H1 (cell line): ENCODE measurements at regions of chr6 and their contacts with region 1.

Region 1: DNA sequence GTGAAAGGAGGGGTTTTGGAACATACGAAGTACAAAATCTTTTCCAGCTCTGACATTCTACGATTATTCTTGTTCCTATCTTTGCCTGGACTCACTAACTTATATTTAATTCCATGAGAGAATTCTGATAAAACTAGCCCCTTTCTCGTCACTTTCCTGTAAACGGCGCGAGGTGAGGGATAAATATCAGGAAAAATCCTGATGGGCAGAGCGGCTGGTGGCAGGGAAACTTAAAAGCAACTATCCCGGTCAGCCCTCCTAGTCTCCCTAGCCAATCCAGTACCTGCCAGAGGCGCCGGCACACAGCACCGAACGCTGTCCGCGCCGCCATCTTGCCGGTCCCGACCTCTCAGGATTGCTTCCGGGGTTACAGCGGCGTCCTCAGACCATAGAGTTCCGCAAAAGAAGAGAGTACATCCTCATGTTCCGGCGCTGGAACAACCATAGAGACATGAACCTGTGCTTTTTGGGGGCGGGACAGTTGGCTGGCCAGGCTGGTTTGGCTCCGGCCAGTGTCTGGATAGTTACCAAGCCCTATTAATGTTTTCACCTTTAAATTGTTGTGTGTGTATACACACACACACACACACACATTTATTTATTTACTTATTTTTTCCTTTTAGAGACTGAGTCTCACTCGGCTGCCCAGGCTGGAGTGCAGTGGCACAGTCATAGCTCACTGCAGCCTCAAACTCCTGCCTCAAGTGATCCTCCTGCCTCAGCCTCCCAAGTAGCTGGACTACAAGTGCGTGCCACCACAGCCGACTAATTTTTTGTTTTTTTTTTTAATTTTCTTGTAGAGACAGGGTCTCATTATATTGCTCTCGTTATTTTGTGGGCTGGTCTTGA is at the start of gene MRPS10:
- DNase-seq: peak; percentile 78 to 87
- H3K4me3 ChIP-seq: peak within 1 kb of the TSS; percentile 93 to 97 (median 94)
- H3K27ac ChIP-seq: peak within 1 kb of the TSS; percentile 52
- H3K4me1 ChIP-seq: no peaks in the 10 kb centered on the region; a peak in 1 of 7 replicates
- H3K27me3 ChIP-seq: no peaks in the 10 kb centered on the region
- CTCF ChIP-seq: no peak
- EP300 ChIP-seq: no peak
- POLR2A ChIP-seq: peak; percentile 68 to 94
- RAD21 ChIP-seq: 0 out of 4 replicates have a peak, but pooled peaks of 1 of the 2 experiments have one; percentile 2
- total RNA-seq, gene MRPS10: 32.0 and 33.6 TPM in 2 replicates

Region 2: DNA sequence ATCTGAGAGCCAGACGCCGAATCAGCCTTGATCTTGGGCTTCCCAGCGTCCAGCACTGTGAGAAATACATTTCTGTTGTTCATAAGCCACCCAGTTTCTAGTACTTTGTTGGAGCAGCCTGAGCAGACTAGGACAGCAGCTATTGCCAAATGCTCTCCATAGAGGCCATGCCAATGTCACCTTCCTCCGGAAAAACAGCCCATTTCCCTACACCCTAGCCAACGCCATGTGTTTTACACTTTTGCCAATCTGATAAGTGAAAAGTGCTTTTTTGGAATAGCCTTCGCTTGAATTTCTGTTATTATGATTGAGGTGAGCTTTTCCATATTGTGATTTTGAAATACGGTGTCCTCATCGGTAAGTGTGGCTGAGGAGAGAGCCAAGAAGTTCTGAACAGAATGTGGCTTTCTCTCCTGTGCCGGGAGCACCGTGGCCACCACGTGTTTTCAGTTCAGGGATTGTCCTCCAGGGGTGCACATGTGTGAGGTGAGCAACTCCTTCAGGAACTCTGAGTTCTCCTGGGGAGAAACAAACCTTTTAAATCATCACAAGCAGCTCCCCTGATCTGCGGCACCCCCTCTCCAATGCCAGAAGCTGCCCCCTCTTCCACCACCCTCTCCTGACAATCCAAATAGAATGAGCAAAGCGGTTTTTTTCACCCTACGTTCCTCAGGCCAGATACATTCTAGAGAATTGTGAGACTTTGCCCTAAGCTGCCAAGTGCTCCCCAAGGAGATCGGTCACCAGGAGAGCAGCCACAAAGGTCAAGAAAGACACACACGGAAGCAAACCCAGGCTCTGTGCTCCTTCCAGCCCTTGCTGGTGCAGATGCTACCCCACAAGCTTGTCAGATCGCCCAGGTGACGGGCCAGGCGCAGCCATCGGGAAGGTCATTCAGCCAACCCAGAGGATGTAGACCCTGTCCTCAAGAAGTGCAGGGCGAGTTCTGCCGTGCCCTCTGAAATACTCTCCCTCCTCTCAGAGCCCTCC is 131.4 kb before region 1 on chr6:
- CTCF ChIA-PET with region 1: interaction called, 35 read pairs
- POLR2A ChIA-PET with region 1: interaction called, 3 read pairs
- DNase-seq: no peak
- H3K4me3 ChIP-seq: no peak overlapping the region
- H3K27ac ChIP-seq: no peak overlapping the region
- H3K4me1 ChIP-seq: peaks cover 0 to 6% (median 0%) of the 10 kb centered on the region in 4 experiments; a peak in 1 of 7 replicates
- H3K27me3 ChIP-seq: peaks cover 0 to 7% (median under 1%) of the 10 kb centered on the region in 4 experiments; a peak in 4 of 7 replicates
- CTCF ChIP-seq: peak; percentile 45 to 63 (median 45); a peak in 3 of 4 replicates
- EP300 ChIP-seq: no peak
- POLR2A ChIP-seq: no peak
- RAD21 ChIP-seq: peak; percentile 14 to 38; a peak in 3 of 4 replicates

Region 3: GRCh38 chr6:42131531-42131930 is 86.2 kb before region 1 on chr6:
- CTCF ChIA-PET with region 1: interaction called, 19 read pairs
- POLR2A ChIA-PET with region 1: interaction called, 3 read pairs
- DNase-seq: no peak
- H3K4me3 ChIP-seq: no peak overlapping the region
- H3K27ac ChIP-seq: no peak overlapping the region
- H3K4me1 ChIP-seq: peaks cover 8 to 28% (median 15%) of the 10 kb centered on the region in 4 experiments
- H3K27me3 ChIP-seq: no peaks in the 10 kb centered on the region
- CTCF ChIP-seq: no peak
- EP300 ChIP-seq: no peak
- POLR2A ChIP-seq: no peak
- RAD21 ChIP-seq: no peak

Region 4: GRCh38 chr6:42185597-42185996 is 32.1 kb before region 1 on chr6:
- CTCF ChIA-PET with region 1: interaction called, 12 read pairs
- POLR2A ChIA-PET with region 1: interaction called, 4 read pairs
- DNase-seq: no peak
- H3K4me3 ChIP-seq: no peak overlapping the region
- H3K27ac ChIP-seq: no peak overlapping the region
- H3K4me1 ChIP-seq: peaks cover 0 to 10% (median 4%) of the 10 kb centered on the region in 4 experiments; a peak in 4 of 7 replicates
- H3K27me3 ChIP-seq: no peaks in the 10 kb centered on the region
- CTCF ChIP-seq: no peak
- EP300 ChIP-seq: no peak
- POLR2A ChIP-seq: no peak
- RAD21 ChIP-seq: no peak

Region 5: GRCh38 chr6:42200035-42200434 is 17.7 kb before region 1 on chr6:
- CTCF ChIA-PET with region 1: interaction called, 26 read pairs
- POLR2A ChIA-PET with region 1: interaction called, 3 read pairs
- DNase-seq: no peak
- H3K4me3 ChIP-seq: no peak overlapping the region
- H3K27ac ChIP-seq: no peak overlapping the region
- H3K4me1 ChIP-seq: no peaks in the 10 kb centered on the region
- H3K27me3 ChIP-seq: no peaks in the 10 kb centered on the region
- CTCF ChIP-seq: no peak
- EP300 ChIP-seq: no peak
- POLR2A ChIP-seq: no peak
- RAD21 ChIP-seq: no peak